Panc1 (cell line): ENCODE measurements at regions of chrX and their contacts with region 1.

Region 1: DNA sequence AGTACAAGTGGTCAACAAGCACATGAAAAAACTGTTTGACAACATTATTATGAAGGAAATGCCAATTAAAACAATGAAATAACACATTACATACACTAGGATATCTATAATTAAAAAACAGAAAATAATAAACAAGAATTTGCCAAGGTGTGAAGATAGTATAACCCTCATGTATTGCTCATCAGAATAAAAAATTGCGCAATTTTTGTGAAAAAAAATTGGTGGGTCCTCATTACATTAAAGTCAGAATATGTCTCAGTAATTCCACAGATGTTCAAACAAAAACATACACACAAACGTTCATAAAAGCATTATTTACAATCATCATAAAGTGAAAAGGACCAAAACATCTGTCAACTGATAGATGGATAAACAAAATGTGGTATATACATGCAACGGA is 63.0 kb upstream of the AR start:
- DNase-seq: no peak
- ATAC-seq: no peak
- H3K4me3 ChIP-seq: no peak overlapping the region
- H3K27ac ChIP-seq: no peak overlapping the region
- H3K4me1 ChIP-seq: no peaks in the 10 kb centered on the region
- H3K27me3 ChIP-seq: no peaks in the 10 kb centered on the region
- CTCF ChIP-seq: no peak

Region 2: DNA sequence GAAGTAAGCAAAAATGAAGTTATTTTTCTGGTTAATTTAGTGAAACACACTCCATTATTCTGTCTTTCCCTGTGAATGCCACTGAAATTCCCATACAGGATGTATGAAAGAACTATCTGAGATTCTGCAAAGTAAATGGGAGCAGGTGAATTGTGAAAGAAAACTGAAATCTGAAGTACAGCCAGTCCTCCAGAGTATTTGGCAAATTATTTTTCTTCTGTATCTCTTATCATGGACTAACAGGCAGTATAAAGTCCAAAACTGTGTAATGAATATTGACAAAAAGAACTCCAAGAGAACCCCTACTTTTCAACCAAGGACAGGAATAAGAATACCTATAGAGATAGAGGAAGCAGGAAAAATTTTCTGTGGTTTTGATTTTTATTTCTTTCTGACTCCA is 22.2 kb after region 1 on chrX:
- CTCF ChIA-PET with region 1: no interaction called
- POLR2A ChIA-PET with region 1: no interaction called
- in situ Hi-C with region 1: no loop called
- intact Hi-C with region 1: no loop called
- DNase-seq: no peak
- ATAC-seq: no peak
- H3K4me3 ChIP-seq: no peak overlapping the region
- H3K27ac ChIP-seq: no peak overlapping the region
- H3K4me1 ChIP-seq: no peaks in the 10 kb centered on the region
- H3K27me3 ChIP-seq: no peaks in the 10 kb centered on the region
- CTCF ChIP-seq: no peak

Region 3: GRCh38 chrX:67535521-67535920 is 54.7 kb after region 1 on chrX:
- CTCF ChIA-PET with region 1: no interaction called
- POLR2A ChIA-PET with region 1: no interaction called
- in situ Hi-C with region 1: no loop called
- intact Hi-C with region 1: loop called (anchors 5 kb)
- DNase-seq: no peak
- ATAC-seq: no peak
- H3K4me3 ChIP-seq: no peak overlapping the region
- H3K27ac ChIP-seq: no peak overlapping the region
- H3K4me1 ChIP-seq: no peaks in the 10 kb centered on the region
- H3K27me3 ChIP-seq: no peaks in the 10 kb centered on the region
- CTCF ChIP-seq: no peak

Region 4: DNA sequence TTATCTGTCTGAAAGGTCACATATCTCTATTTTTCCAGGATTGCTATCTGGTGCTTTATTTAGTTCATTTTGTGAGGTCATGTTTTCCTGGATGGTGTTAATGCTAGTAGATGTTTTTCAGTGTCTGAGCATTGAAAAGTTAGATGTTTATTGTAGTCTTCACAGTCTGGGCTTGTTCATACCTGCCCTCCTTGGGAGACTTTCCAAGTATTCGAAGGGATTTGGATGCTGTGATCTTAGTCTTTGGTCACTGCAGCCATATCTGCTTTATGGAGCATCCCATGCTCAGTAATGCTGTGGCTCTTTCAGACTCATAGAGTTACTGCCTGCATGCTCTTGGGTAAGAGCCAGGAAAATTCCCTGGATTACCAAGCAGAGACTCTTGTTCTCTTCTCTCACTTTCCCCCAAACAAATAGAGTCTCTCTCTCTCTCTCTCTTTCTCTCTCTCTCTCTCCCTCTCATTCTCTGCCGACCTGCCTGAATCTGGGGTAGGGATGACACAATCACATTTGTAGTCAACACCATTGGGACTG is 193.0 kb after region 1 on chrX:
- CTCF ChIA-PET with region 1: no interaction called
- POLR2A ChIA-PET with region 1: no interaction called
- in situ Hi-C with region 1: no loop called
- intact Hi-C with region 1: no loop called
- DNase-seq: no peak
- ATAC-seq: no peak
- H3K4me3 ChIP-seq: no peak overlapping the region
- H3K27ac ChIP-seq: no peak overlapping the region
- H3K4me1 ChIP-seq: no peaks in the 10 kb centered on the region
- H3K27me3 ChIP-seq: no peaks in the 10 kb centered on the region
- CTCF ChIP-seq: no peak

Region 5: DNA sequence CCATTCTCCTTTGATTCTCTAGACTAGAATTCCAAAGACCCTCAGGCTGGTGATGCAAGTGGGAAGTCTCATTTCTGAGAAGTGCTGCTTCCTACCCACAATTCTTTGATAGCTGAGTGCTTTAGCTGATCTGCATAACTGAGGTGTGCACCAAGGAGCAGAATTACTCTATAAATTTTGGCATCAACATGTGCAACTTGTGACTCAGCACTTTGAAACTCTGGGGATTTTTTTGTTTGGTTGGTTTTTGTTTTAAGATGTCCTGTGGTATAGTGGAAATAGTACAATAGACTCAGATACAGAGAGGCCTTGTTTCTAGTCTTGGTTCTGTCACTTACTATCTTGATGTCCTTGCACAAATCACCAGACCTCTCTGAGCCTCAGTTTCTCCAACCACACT is 211.5 kb after region 1 on chrX:
- CTCF ChIA-PET with region 1: no interaction called
- POLR2A ChIA-PET with region 1: no interaction called
- in situ Hi-C with region 1: no loop called
- intact Hi-C with region 1: no loop called
- DNase-seq: no peak
- ATAC-seq: no peak
- H3K4me3 ChIP-seq: no peak overlapping the region
- H3K27ac ChIP-seq: no peak overlapping the region
- H3K4me1 ChIP-seq: no peaks in the 10 kb centered on the region
- H3K27me3 ChIP-seq: no peaks in the 10 kb centered on the region
- CTCF ChIP-seq: no peak